ENCODE measurements at regions of chr16 and their contacts with region 1.

Region 1: DNA sequence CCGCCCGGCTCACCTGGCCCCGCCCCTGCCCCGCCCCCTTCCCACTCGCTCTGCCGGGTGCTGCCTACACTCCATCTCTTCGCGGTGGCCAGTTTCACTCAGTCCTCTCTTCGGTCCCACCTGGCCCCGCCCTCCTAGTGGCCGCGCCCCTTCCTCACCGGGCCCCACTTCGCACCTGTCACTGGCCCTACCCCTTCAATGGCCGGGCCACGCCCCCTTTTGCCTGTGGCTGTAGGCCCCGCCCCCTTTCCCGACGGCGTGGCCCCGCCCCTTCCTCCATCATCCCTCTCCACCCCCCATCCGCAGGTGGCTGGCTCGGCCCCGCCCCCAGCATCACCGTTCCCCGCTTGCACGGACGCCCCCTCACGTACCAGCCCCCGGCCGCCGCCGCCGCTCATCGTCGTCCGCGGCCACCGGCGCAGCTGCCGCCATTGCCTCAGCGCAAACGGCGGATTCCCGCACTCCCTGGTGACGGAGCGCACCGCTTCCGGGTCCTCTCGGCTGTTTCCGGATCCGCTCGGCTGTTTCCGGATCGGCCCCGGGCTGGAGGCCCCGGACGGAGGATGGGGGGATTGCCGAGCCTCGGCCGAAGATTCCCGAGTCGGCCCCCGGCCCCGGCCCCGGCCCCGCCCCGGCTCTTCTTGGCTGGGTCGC is at the start of gene RABEP2:
- DNase-seq: peak; percentile 93

Region 2: DNA sequence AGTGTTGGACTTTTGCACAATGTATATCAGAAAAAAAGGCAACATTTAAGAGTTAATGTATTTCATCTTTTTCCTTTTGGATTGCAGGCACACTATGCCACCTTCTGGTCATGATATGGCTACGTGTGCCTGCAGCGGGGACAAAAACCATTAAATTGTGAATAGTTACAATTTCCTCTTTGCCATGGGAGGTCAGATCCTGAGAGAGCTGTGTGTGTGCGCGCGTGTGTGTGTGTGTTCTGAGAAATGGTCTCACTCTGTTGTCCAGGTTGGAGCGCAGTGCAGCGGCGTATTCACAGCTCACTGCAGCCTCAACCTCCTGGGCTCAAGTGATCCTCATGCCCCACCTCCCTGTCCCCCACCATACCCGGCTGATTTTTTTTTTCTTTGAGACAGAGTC is 375.5 kb before region 1 on chr16:
- in situ Hi-C with region 1: loop called (anchors 25 kb)
- DNase-seq: peak; percentile 76

Measured in KBM-7 (cell line).